ENCODE measurements at regions of chr20 and their contacts with region 1.

Region 1: DNA sequence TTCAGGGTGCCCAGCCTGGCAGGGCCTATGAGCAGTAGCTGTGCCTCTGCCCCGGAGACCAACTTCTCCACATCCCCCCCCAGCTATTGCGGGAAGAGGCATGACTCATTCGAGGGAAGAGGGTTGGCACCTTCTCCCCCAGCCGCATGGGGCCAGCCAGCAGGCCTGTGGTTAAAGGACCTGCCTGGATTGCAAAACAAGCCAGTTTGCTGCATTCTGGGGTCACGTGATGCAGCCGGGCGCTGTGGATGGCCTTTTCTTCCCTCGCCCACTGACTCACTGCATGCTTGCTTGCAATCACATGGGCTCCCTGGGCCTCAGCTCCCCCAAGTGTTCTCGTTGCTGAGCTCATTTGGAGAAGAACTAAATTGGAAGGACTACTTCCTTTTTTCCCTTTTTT is 182.5 kb downstream of the MAFB start:
- DNase-seq: peak; percentile 96 to 99
- ATAC-seq: peak; percentile 91
- H3K4me3 ChIP-seq: no peak overlapping the region
- H3K27ac ChIP-seq: no peak overlapping the region
- H3K4me1 ChIP-seq: no peaks in the 10 kb centered on the region
- H3K27me3 ChIP-seq: no peaks in the 10 kb centered on the region

Region 2: GRCh38 chr20:40265825-40266533 is 240.6 kb before region 1 on chr20:
- intact Hi-C with region 1: loop called in 1 of 2 experiments (anchors 10 kb)
- DNase-seq: no peak
- ATAC-seq: peak; percentile 46
- H3K4me3 ChIP-seq: no peak overlapping the region
- H3K27ac ChIP-seq: no peak overlapping the region
- H3K4me1 ChIP-seq: no peaks in the 10 kb centered on the region
- H3K27me3 ChIP-seq: no peaks in the 10 kb centered on the region

Region 3: GRCh38 chr20:40293740-40294139 is 212.8 kb before region 1 on chr20:
- intact Hi-C with region 1: loop called in 1 of 2 experiments (anchors 5 kb)
- DNase-seq: peak in 1 of 2 donors; percentile 45
- ATAC-seq: peak; percentile 85
- H3K4me3 ChIP-seq: no peak overlapping the region
- H3K27ac ChIP-seq: peak overlapping the region; percentile 1 to 82
- H3K4me1 ChIP-seq: peaks cover 3 to 10% of the 10 kb centered on the region in 2 donors
- H3K27me3 ChIP-seq: no peaks in the 10 kb centered on the region

Region 4: GRCh38 chr20:40563296-40563944 is 56.9 kb after region 1 on chr20:
- intact Hi-C with region 1: loop called in 1 of 2 experiments (anchors 5 kb)
- DNase-seq: peak in 1 of 2 donors; percentile 79
- ATAC-seq: no peak
- H3K4me3 ChIP-seq: no peak overlapping the region
- H3K27ac ChIP-seq: no peak overlapping the region
- H3K4me1 ChIP-seq: no peaks in the 10 kb centered on the region
- H3K27me3 ChIP-seq: no peaks in the 10 kb centered on the region